ENCODE measurements at regions of chr3 and their contacts with region 1.

Region 1: DNA sequence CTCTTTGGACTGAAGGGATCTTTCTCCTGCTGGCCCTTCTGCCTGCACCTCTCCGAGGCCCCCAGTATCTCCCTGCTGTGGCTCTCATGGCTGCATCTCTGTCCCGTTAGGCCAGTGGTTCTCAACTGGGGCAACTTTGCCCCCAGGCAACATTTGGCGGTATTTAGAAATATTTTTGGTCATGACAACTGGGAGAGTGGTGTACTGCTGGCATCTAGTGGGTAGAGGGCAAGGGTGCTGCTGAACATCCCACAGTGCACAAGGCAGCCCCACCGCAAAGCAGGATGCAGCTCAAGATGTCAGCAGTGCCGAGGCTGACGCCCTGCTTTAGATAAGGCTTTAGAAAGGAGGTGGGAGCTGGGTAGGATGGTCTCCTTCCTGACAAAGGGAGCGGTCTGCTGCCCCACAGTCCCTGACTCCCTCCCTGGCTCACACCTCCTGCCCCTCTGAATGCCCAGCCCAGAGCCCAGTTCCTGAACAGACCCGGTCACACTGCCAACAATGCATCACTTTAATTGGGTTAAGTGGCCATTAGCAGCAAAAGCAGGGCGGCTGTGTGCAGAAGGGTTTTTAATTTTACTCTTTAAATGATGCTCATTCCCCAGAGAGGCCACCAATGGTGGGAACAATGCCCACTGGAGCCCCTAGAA is 68.8 kb upstream of the TMEM115 start:
- DNase-seq: peak; percentile 29
- H3K4me3 Mint-ChIP-seq: no peak overlapping the region
- H3K27ac Mint-ChIP-seq: no peak overlapping the region
- H3K4me1 Mint-ChIP-seq: no peaks in the 10 kb centered on the region
- H3K27me3 Mint-ChIP-seq: peaks cover 85% of the 10 kb centered on the region
- CTCF ChIP-seq: no peak

Region 2: DNA sequence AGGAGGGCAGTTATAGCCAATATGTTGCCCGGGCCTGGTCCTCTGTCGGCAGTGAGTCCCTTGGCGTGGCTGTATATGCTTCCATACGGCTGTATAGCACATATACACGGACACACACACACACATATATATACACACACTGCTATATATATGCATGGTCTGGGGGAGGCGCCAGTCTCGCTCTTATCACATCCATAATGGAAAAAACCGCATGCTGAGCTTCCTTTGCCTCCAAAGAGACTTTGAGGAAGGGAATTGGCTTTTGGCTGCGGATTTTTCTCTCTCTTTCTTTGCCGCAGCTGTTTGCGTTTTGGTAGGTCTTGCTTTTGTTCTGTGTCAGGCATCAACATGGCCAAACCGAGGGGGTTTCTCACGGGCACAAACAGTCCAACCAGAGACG is 57.5 kb before region 1 on chr3:
- CTCF ChIA-PET with region 1: interaction called, 4 read pairs
- intact Hi-C with region 1: loop called (anchors 10 kb)
- DNase-seq: peak; percentile 27
- H3K4me3 Mint-ChIP-seq: no peak overlapping the region
- H3K27ac Mint-ChIP-seq: no peak overlapping the region
- H3K4me1 Mint-ChIP-seq: no peaks in the 10 kb centered on the region
- H3K27me3 Mint-ChIP-seq: peaks cover 63% of the 10 kb centered on the region
- CTCF ChIP-seq: no peak

Region 3: GRCh38 chr3:51257870-51258269 is 829.8 kb after region 1 on chr3:
- CTCF ChIA-PET with region 1: no interaction called
- intact Hi-C with region 1: no loop called
- DNase-seq: no peak
- H3K4me3 Mint-ChIP-seq: no peak overlapping the region
- H3K27ac Mint-ChIP-seq: no peak overlapping the region
- H3K4me1 Mint-ChIP-seq: no peaks in the 10 kb centered on the region
- H3K27me3 Mint-ChIP-seq: peaks cover 91% of the 10 kb centered on the region
- CTCF ChIP-seq: no peak